Heart right ventricle (tissue), 16 donors: ENCODE measurements at regions of chr6 and their contacts with region 1.

Region 1: GRCh38 chr6:28981833-28982475 is 23.2 kb downstream of the ZNF311 start:
- DNase-seq: peak; percentile 72 to 86
- ATAC-seq: peak; percentile 72 to 90 (median 86)
- H3K4me3 ChIP-seq: peak overlapping the region; percentile 42 to 71 (median 66)
- H3K27ac ChIP-seq: peak overlapping the region; percentile 21 to 76 (median 68)
- H3K4me1 ChIP-seq: peaks cover 0 to 47% (median 6%) of the 10 kb centered on the region in 9 donors
- H3K27me3 ChIP-seq: peaks cover 0 to 18% (median 14%) of the 10 kb centered on the region in 7 donors
- CTCF ChIP-seq: peak in 5 of 9 donors; percentile 15 to 40 (median 23)

Region 2: DNA sequence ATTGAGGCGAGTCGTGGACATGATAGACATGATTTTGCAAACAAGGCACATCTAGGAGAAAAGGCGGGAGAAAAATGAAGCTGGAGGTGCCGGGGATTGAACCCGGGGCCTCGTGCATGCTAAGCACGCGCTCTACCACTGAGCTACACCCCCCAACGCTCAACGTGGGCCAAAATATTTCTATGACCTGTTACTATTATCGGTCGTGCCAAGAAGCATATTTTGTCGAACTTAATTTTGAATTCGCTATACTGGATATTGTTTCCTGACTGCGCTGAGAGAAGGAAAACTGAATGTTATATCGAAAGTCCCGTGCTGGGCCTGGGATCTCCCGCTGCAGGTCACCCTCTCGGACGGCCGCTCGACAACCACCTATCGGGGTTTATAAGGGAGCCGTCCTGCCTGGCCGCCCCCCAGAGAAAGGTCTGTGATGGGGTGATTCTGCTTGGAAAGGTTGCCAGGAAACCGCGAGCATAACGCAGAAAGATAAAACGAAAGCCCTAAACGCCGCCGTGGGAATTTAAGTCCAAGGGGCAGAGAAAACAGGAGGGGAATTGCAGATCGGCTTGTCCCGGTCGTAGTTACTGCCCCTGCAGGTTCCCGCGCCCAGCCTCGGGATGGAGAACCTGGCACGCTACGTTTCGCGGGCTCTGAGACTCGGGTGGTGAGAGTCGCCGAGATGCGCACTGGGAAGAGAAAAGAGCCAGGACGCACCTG is 118.2 kb before region 1 on chr6:
- intact Hi-C with region 1: loop called in 4 of 10 experiments (anchors 10 kb)
- DNase-seq: peak; percentile 53 to 62
- ATAC-seq: peak; percentile 59 to 92 (median 86)
- H3K4me3 ChIP-seq: peak overlapping the region; percentile 28 to 92 (median 66)
- H3K27ac ChIP-seq: peak overlapping the region in 1 of 10 donors; percentile 39
- H3K4me1 ChIP-seq: peaks cover 2 to 20% (median 10%) of the 10 kb centered on the region in 9 donors
- H3K27me3 ChIP-seq: peaks cover 0 to 17% (median 0%) of the 10 kb centered on the region in 7 donors
- CTCF ChIP-seq: no peak

Region 3: DNA sequence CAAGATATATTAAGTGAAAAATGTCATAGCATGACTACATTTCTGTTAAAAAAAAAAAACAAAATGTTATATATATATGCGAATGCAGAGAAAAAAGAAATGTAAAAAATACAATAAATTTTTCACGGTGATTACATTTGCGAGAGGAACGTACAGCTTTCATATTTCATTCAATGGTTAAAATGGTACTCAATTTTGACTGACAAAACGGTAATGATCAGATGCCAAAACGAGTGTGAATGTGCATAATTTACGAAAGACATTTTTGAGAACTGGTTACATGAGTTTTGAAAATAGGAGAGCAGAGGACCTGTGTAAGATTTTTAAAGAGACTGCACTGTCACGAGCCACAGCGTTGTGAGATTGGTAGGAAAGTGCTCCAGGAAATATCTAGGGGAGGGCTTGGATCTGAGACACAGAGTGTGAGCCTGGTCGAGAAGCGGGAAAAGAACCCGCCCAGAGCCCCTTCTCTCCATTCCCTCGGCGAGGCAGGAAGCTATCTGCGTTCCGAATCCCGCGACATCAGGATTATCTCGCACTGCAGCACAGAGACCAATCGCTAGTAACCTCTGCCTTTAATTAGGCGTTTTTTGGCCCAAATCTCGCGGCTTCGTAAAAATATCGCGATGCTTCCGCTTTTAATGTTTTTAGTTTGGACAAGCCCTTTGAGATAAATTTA is 86.7 kb before region 1 on chr6:
- intact Hi-C with region 1: loop called in 6 of 10 experiments (anchors 1 to 10 kb)
- DNase-seq: peak; percentile 85 to 95
- ATAC-seq: peak; percentile 88 to 93 (median 91)
- H3K4me3 ChIP-seq: peak overlapping the region; percentile 50 to 78 (median 70)
- H3K27ac ChIP-seq: peak overlapping the region; percentile 91 to 99 (median 97)
- H3K4me1 ChIP-seq: peaks cover 0 to 20% (median 10%) of the 10 kb centered on the region in 9 donors
- H3K27me3 ChIP-seq: no peaks in the 10 kb centered on the region
- CTCF ChIP-seq: no peak